ENCODE measurements at regions of chr19 and their contacts with region 1.

Region 1: GRCh38 chr19:9934132-9934950 is 2.0 kb downstream of the OLFM2 start:
- DNase-seq: peak; percentile 63 to 90 (median 80)
- ATAC-seq: peak; percentile 92
- H3K4me3 ChIP-seq: no peak overlapping the region
- H3K4me3 Mint-ChIP-seq: no peak overlapping the region
- H3K27ac ChIP-seq: no peak overlapping the region
- H3K27ac Mint-ChIP-seq: no peak overlapping the region
- H3K4me1 ChIP-seq: peaks cover 21% of the 10 kb centered on the region
- H3K4me1 Mint-ChIP-seq: peaks cover 30% of the 10 kb centered on the region
- H3K27me3 ChIP-seq: peaks cover 6 to 38% of the 10 kb centered on the region in 2 experiments
- H3K27me3 Mint-ChIP-seq: peaks cover 51% of the 10 kb centered on the region
- CTCF ChIP-seq: peak; percentile 89

Region 2: DNA sequence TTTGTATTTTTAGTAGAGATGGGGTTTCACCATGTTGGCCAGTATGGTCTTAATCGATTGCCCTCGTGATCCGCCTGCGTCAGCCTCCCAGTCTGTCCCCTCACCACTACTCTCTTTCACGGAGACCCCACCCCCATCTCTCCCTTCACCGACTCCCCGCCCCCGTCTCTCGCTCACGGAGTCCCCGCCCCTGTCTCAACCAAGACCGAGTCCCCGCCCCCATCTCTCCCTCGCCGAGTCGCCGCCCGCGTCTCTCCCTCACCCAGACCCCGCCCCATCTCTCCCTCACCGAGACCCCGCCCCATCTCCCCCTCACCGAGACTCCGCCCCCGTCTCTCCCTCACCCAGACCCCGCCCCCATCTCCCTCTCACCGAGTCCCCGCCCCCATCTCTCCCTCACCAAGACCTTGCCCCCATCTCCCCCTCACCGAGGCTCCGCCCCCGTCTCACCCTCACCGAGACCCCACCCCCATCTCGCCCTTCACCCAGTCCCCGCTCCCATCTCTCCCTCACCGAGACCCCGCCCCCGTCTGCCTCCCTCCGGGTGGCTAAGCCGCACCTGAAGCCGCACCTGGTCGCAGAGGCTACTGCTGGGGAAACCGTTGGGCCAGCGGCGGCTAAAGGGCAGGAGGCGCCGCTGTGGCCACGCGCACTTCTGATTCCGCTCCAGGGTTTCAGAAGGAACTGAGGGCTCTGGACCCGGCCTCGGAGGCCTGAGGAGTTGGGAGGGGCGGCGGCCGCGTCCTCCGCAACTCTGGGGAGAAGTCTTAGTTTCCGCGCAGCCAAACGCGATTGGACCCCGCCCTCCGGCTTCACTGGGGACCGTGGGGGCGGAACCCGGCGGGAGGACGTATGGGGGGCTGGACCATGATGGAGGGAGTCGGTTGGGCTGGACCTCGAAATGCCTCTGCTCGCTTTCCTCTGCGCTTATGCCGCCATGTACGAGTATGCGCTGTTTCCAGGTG is 148.7 kb before region 1 on chr19:
- CTCF ChIA-PET with region 1: no interaction called
- POLR2A ChIA-PET with region 1: no interaction called
- intact Hi-C with region 1: no loop called
- DNase-seq: peak; percentile 90 to 98 (median 97)
- ATAC-seq: peak; percentile 82
- H3K4me3 ChIP-seq: peak overlapping the region; percentile 95 to 97
- H3K4me3 Mint-ChIP-seq: peak overlapping the region; percentile 88
- H3K27ac ChIP-seq: peak overlapping the region; percentile 87 to 98
- H3K27ac Mint-ChIP-seq: peak overlapping the region; percentile 95
- H3K4me1 ChIP-seq: peaks cover 10% of the 10 kb centered on the region
- H3K4me1 Mint-ChIP-seq: peaks cover 29% of the 10 kb centered on the region
- H3K27me3 ChIP-seq: no peaks in the 10 kb centered on the region
- H3K27me3 Mint-ChIP-seq: no peaks in the 10 kb centered on the region
- CTCF ChIP-seq: no peak

Region 3: DNA sequence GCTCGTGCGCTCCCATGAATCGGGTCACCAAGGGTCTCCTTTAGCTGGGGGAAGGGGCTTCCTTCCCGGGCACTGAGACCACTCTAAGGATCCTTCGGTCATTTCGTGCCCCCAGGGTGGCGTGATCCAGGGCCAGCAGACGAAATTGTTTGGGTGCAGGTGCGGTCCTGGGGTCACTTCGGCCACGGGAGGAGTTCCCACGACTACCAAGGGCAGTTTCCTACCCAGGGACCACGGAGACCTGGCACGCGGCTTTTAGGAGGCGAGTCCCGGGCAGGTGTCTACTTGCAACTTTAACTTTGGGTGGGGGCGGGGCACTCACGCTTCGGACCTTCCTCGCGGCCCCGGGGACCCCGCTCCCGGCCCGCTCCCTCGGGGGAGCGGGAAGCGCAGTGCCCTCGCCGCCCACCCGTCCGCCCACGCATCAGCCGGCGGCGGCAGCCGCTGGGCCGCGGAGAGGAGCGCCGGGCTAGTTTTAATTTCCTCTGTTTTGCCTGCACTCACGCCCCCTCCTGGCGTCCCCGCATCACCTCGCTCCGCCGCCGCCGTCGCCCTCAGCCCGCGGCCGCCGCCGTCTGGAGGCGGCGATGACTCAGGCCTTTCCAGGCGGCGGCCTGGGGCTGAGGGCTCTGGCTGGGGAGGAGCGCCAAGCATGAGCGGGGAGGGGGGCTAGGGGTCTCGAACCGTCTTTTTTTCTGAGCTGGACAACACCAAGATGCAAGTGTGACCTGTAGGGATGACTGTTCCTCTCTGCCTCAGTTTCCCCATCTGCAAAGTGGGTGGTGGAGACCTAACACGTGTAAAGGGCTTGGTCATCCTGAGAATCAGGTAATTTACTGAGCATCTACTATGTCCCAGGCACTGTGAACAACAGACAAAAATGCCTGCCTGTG is 19.8 kb before region 1 on chr19:
- CTCF ChIA-PET with region 1: interaction called, 11 read pairs
- POLR2A ChIA-PET with region 1: no interaction called
- intact Hi-C with region 1: no loop called
- DNase-seq: peak; percentile 69 to 89 (median 81)
- ATAC-seq: peak; percentile 92
- H3K4me3 ChIP-seq: peak overlapping the region; percentile 49 to 66
- H3K4me3 Mint-ChIP-seq: peak overlapping the region; percentile 73
- H3K27ac ChIP-seq: no peak overlapping the region
- H3K27ac Mint-ChIP-seq: no peak overlapping the region
- H3K4me1 ChIP-seq: peaks cover 15% of the 10 kb centered on the region
- H3K4me1 Mint-ChIP-seq: peaks cover 8% of the 10 kb centered on the region
- H3K27me3 ChIP-seq: peaks cover 0 to 15% of the 10 kb centered on the region in 2 experiments
- H3K27me3 Mint-ChIP-seq: peaks cover 30% of the 10 kb centered on the region
- CTCF ChIP-seq: peak; percentile 73

Region 4: GRCh38 chr19:10027158-10027693 is 92.9 kb after region 1 on chr19:
- CTCF ChIA-PET with region 1: interaction called, 92 read pairs
- POLR2A ChIA-PET with region 1: interaction called, 4 read pairs
- intact Hi-C with region 1: loop called (anchors 1 kb)
- DNase-seq: no peak
- ATAC-seq: no peak
- H3K4me3 ChIP-seq: no peak overlapping the region
- H3K4me3 Mint-ChIP-seq: no peak overlapping the region
- H3K27ac ChIP-seq: no peak overlapping the region
- H3K27ac Mint-ChIP-seq: no peak overlapping the region
- H3K4me1 ChIP-seq: peaks cover 8% of the 10 kb centered on the region
- H3K4me1 Mint-ChIP-seq: peaks cover 7% of the 10 kb centered on the region
- H3K27me3 ChIP-seq: peaks cover 3 to 5% of the 10 kb centered on the region in 2 experiments
- H3K27me3 Mint-ChIP-seq: peaks cover 18% of the 10 kb centered on the region
- CTCF ChIP-seq: no peak

Region 5: GRCh38 chr19:10142701-10143375 is 208.5 kb after region 1 on chr19:
- CTCF ChIA-PET with region 1: interaction called, 5 read pairs
- POLR2A ChIA-PET with region 1: no interaction called
- intact Hi-C with region 1: loop called in 1 of 2 experiments (anchors 1 kb)
- DNase-seq: peak; percentile 19 to 86 (median 58)
- ATAC-seq: peak; percentile 94
- H3K4me3 ChIP-seq: peak overlapping the region; percentile 11 to 45
- H3K4me3 Mint-ChIP-seq: peak overlapping the region; percentile 76
- H3K27ac ChIP-seq: peak overlapping the region; percentile 80 to 94
- H3K27ac Mint-ChIP-seq: peak overlapping the region; percentile 98
- H3K4me1 ChIP-seq: peaks cover 45% of the 10 kb centered on the region
- H3K4me1 Mint-ChIP-seq: peaks cover 42% of the 10 kb centered on the region
- H3K27me3 ChIP-seq: no peaks in the 10 kb centered on the region
- H3K27me3 Mint-ChIP-seq: no peaks in the 10 kb centered on the region
- CTCF ChIP-seq: peak; percentile 29

Region 6: DNA sequence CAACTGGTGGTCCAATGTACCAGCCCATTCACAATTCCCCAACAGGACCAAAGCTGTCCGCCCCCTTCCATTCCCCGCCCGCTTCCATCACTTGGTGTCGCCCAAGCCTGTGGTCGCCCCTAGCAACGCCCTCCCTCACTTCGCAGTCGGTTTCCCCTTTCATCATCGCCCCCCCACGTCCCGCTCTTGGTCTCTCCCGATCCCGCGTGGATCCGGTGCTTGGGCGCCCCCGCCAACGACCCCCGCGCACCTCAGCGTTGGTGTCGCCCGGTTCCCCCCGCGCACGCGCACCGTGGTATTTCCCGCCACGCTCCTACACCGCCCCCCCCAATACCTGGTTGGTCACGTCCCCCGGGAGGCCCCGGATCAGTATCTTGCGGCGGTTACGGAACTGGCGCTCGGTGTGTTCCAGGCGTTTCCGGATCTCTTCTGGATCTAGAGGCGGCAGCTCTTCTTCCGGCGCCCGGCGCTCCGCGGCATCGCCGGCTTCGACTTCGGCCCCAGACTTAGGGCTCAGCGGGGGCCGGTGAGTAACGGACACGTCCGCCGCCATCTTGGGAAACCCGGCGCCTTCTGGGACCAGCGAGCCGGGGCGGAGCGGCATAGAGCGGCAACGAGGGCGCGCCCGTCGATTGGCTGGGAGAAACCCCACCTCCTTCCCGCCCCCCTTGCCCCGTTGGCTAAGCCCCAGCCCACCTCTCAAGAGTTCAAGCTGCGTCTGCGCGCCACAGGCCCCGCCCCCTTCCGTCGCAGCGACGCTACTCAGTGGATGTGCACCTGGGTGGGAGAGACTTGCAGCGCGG is 398.8 kb after region 1 on chr19 and contains the start of gene RAVER1:
- CTCF ChIA-PET with region 1: no interaction called
- POLR2A ChIA-PET with region 1: no interaction called
- intact Hi-C with region 1: loop called in 1 of 2 experiments (anchors 5 kb)
- DNase-seq: peak; percentile 94 to 99 (median 98)
- ATAC-seq: peak; percentile 96
- H3K4me3 ChIP-seq: peak within 1 kb of the TSS; percentile 93 to 97
- H3K4me3 Mint-ChIP-seq: peak within 1 kb of the TSS; percentile 95
- H3K27ac ChIP-seq: peak within 1 kb of the TSS; percentile 76 to 95
- H3K27ac Mint-ChIP-seq: peak within 1 kb of the TSS; percentile 93
- H3K4me1 ChIP-seq: peaks cover 30% of the 10 kb centered on the region
- H3K4me1 Mint-ChIP-seq: peaks cover 35% of the 10 kb centered on the region
- H3K27me3 ChIP-seq: no peaks in the 10 kb centered on the region
- H3K27me3 Mint-ChIP-seq: no peaks in the 10 kb centered on the region
- CTCF ChIP-seq: no peak
- total RNA-seq, gene RAVER1: 33.3 to 33.6 TPM